Activated B cell treated with CpG ODN at 0.5 μM for 24 hours (primary cell): ENCODE measurements at regions of chr17 and their contacts with region 1.

Region 1: GRCh38 chr17:20009302-20010098 is at the start of gene SPECC1:
- DNase-seq: peak; percentile 96
- ATAC-seq: peak; percentile 99
- H3K4me3 Mint-ChIP-seq: peak within 1 kb of the TSS; percentile 87
- H3K27ac Mint-ChIP-seq: no peak within 1 kb of the TSS
- H3K4me1 Mint-ChIP-seq: peaks cover 13% of the 10 kb centered on the region
- H3K27me3 Mint-ChIP-seq: peaks cover 38% of the 10 kb centered on the region
- CTCF ChIP-seq: peak; percentile 94
- total RNA-seq, gene SPECC1: 7.5 and 11.5 TPM in 2 replicates

Region 2: GRCh38 chr17:20155258-20156195 is 146.0 kb after region 1 on chr17:
- CTCF ChIA-PET with region 1: no interaction called
- POLR2A ChIA-PET with region 1: no interaction called
- intact Hi-C with region 1: loop called (anchors 1 kb)
- DNase-seq: peak; percentile 99
- ATAC-seq: peak; percentile 93
- H3K4me3 Mint-ChIP-seq: no peak overlapping the region
- H3K27ac Mint-ChIP-seq: no peak overlapping the region
- H3K4me1 Mint-ChIP-seq: peaks cover 6% of the 10 kb centered on the region
- H3K27me3 Mint-ChIP-seq: no peaks in the 10 kb centered on the region
- CTCF ChIP-seq: no peak